ENCODE measurements at regions of chr7 and their contacts with region 1.

Region 1: DNA sequence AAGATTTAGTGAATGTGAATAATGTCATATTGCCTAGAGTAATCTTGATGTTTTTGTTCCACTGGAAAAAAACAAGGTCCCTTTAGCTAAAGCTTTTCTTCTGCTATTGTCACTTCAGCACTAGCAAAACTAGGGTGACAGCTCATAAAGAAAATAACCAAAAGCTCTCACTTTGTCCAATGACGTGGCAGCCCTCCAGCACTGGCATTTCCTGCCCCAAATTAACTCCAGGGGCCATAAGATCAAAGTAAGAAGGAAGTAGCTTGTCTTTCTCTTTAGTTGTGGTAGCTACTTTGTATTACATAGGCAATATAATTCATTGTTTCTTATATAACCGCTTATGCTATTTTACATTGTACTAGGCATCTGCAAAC is 47.3 kb downstream of the LRRN3 start:
- H3K4me3 Mint-ChIP-seq: no peak overlapping the region
- H3K27ac Mint-ChIP-seq: peak overlapping the region; percentile 91
- H3K4me1 Mint-ChIP-seq: peaks cover 10% of the 10 kb centered on the region
- H3K27me3 Mint-ChIP-seq: no peaks in the 10 kb centered on the region

Region 2: GRCh38 chr7:111083413-111083812 is 54.8 kb before region 1 on chr7:
- intact Hi-C with region 1: loop called (anchors 5 kb)
- H3K4me3 Mint-ChIP-seq: no peak overlapping the region
- H3K27ac Mint-ChIP-seq: peak overlapping the region; percentile 41
- H3K4me1 Mint-ChIP-seq: peaks cover 26% of the 10 kb centered on the region
- H3K27me3 Mint-ChIP-seq: peaks cover 8% of the 10 kb centered on the region

Measured in dendritic cell treated with granulocyte-macrophage colony-stimulating factor and Interleukin-4, amounts not matched to agents 40 ng/mL and 50 ng/mL, for 4 days (primary cell).